ENCODE measurements at regions of chr2 and their contacts with region 1.

Region 1: GRCh38 chr2:203909261-203909967 is 27.1 kb upstream of the ICOS start:
- DNase-seq: peak in 7 of 14 experiments; percentile 10 to 70 (median 45)
- ATAC-seq: peak; percentile 82
- H3K4me3 ChIP-seq: peak overlapping the region; percentile 39
- H3K4me3 Mint-ChIP-seq: peak overlapping the region; percentile 5
- H3K27ac ChIP-seq: no peak overlapping the region
- H3K27ac Mint-ChIP-seq: peak overlapping the region; percentile 18
- H3K4me1 ChIP-seq: peaks cover 13% of the 10 kb centered on the region
- H3K4me1 Mint-ChIP-seq: peaks cover 19% of the 10 kb centered on the region
- H3K27me3 ChIP-seq: no peaks in the 10 kb centered on the region
- H3K27me3 Mint-ChIP-seq: no peaks in the 10 kb centered on the region
- CTCF ChIP-seq: peak; percentile 87

Region 2: GRCh38 chr2:203225423-203226039 is 683.9 kb before region 1 on chr2:
- CTCF ChIA-PET with region 1: no interaction called
- POLR2A ChIA-PET with region 1: no interaction called
- intact Hi-C with region 1: loop called in 1 of 2 experiments (anchors 2 kb)
- DNase-seq: peak in 10 of 14 experiments; percentile 8 to 68 (median 20)
- ATAC-seq: peak; percentile 94
- H3K4me3 ChIP-seq: no peak overlapping the region
- H3K4me3 Mint-ChIP-seq: no peak overlapping the region
- H3K27ac ChIP-seq: no peak overlapping the region
- H3K27ac Mint-ChIP-seq: no peak overlapping the region
- H3K4me1 ChIP-seq: no peaks in the 10 kb centered on the region
- H3K4me1 Mint-ChIP-seq: no peaks in the 10 kb centered on the region
- H3K27me3 ChIP-seq: no peaks in the 10 kb centered on the region
- H3K27me3 Mint-ChIP-seq: no peaks in the 10 kb centered on the region
- CTCF ChIP-seq: peak; percentile 74

Region 3: DNA sequence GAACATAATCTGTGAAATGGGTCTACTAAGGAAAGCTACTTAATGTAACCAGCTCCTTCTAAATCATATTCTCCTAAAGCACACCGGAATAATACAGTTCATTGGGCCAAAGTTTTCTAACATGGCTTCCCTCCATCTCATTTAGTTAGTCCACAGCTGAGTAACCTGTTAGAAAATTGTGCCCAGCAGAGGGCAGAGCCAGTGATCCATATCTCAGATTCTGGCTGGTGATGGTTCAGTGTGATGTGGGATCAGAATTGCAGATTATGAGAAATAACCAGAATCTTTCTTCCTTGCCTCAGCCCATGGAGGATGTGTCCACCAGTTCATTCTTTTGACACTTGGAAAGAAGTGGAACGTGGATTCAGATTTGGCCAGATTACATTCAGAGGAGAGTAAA is 51.2 kb before region 1 on chr2:
- CTCF ChIA-PET with region 1: interaction called, 8 read pairs
- POLR2A ChIA-PET with region 1: interaction called, 10 read pairs
- intact Hi-C with region 1: loop called (anchors 1 kb)
- DNase-seq: peak in 5 of 14 experiments; percentile 11 to 66 (median 50)
- ATAC-seq: peak; percentile 41
- H3K4me3 ChIP-seq: no peak overlapping the region
- H3K4me3 Mint-ChIP-seq: peak overlapping the region; percentile 31
- H3K27ac ChIP-seq: no peak overlapping the region
- H3K27ac Mint-ChIP-seq: peak overlapping the region; percentile 73
- H3K4me1 ChIP-seq: peaks cover 26% of the 10 kb centered on the region
- H3K4me1 Mint-ChIP-seq: peaks cover 78% of the 10 kb centered on the region
- H3K27me3 ChIP-seq: no peaks in the 10 kb centered on the region
- H3K27me3 Mint-ChIP-seq: no peaks in the 10 kb centered on the region
- CTCF ChIP-seq: peak; percentile 35

Region 4: DNA sequence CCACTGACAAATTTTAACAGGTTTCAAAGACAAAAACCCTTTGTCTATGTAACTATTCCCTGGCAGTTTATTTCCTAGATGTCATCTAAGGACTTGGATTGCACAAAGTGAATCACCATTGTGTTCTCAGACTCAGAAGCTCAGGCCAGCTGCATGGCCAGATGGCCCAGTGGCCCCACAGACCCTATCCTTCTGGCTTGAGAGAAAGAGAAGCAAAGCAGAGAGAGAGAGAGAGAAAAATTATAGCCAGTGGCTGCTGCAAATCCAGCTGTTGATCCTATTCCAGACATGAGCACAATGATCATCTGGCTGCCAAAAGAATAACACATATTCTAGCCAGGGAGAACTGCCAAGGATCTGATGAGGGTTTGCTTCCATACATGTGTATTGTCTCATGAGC is 16.0 kb before region 1 on chr2:
- CTCF ChIA-PET with region 1: no interaction called
- POLR2A ChIA-PET with region 1: no interaction called
- intact Hi-C with region 1: no loop called
- DNase-seq: no peak
- ATAC-seq: no peak
- H3K4me3 ChIP-seq: no peak overlapping the region
- H3K4me3 Mint-ChIP-seq: no peak overlapping the region
- H3K27ac ChIP-seq: no peak overlapping the region
- H3K27ac Mint-ChIP-seq: no peak overlapping the region
- H3K4me1 ChIP-seq: no peaks in the 10 kb centered on the region
- H3K4me1 Mint-ChIP-seq: peaks cover 12% of the 10 kb centered on the region
- H3K27me3 ChIP-seq: no peaks in the 10 kb centered on the region
- H3K27me3 Mint-ChIP-seq: no peaks in the 10 kb centered on the region
- CTCF ChIP-seq: no peak